Posterior vena cava (tissue), 2 donors: ENCODE measurements at regions of chr15 and their contacts with region 1.

Region 1: DNA sequence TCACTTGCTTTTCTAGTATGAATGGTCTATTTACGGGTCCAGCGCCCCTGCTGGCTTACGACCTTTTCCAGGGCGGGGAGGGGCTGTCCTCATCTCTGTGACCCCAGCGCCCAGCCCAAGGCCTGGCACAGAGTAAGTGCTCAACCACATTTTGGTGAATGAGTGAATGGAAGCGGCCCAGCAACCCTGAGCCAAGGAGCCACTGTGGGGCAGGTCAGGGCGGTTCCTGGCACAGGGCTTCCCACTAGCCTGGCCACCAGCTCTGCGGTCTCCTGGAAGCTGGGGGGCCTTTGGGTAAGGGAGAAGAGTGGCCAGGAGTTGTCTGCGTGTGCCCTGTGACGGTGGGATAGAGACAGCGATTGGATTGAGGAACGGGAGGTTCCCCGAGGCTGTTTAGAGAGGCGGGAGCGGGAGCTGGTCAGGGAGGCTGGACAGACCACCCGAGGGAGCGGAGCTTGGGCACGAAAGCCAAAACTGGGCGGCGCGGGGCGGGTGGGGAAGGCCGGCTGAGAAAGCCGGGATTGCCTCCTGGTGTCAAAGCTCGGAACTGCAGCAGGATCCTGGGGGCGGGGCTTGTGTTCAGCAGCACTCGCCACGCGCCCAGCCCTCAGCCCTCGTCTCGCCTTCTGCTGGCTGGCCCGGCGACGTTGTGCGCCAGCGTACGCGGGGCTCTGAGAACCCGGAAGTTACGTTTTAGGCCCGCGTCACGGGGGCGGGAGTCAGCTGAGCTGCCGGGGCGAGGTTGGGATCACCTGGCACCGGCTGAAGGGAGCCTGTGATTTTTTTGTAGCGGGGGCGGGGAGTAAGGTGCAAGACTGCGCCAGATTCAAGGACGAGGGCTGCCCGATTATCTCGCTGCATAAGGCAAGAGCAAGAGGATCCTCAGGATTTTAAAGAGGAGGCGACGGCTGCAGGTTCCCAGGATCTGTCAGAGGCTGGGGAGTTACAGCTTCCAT is at the start of gene VPS18:
- DNase-seq: peak; percentile 100
- total RNA-seq, gene VPS18: 21.9 to 23.3 TPM

Region 2: DNA sequence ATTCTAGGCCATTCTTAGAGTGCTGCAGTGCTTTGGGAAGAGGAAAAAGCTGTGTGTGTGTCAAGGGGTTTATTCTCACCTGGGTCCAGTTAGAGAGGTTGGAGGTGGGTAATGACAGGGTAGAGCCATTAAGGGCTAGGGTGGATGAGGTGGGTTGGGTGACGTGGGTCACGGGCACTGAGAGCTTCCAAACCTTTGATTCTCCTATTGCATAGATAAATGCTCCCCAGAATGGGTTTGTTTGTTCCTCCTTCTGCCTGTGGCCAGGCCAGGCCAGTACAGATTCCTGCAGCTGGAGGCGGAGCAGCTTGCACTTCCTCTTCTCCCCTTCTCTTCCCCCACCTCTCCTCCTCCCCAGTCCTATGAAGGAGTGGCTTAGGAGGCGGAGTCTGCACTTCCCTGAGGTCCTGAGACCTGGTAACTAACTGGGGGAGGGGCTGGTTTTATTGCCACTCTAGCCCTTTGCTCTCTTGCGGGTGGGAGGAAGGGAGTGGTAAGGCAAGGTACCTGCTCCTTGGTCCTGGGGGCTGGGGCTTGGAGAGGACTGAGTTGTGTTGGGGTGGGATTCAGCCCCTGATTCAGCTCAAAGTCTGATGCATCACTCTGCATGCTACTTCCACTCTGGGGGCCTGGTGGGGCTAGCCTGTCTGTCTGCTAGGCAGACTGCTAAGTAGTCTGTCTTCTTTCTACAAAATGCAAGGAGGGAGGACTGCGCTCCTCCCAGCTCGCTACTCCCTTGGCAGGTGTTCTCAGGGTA is 46.6 kb before region 1 on chr15:
- intact Hi-C with region 1: no loop called
- DNase-seq: peak; percentile 83

Region 3: GRCh38 chr15:40857601-40858341 is 36.2 kb before region 1 on chr15:
- intact Hi-C with region 1: loop called in 1 of 2 experiments (anchors 5 kb)
- DNase-seq: peak; percentile 93

Region 4: GRCh38 chr15:40873625-40874561 is 20.1 kb before region 1 on chr15 and contains the start of gene RHOV:
- intact Hi-C with region 1: loop called in 1 of 2 experiments (anchors 2 kb)
- DNase-seq: no peak
- total RNA-seq, gene RHOV: not detected